MCF 10A (cell line): ENCODE measurements at regions of chr14 and their contacts with region 1.

Region 1: DNA sequence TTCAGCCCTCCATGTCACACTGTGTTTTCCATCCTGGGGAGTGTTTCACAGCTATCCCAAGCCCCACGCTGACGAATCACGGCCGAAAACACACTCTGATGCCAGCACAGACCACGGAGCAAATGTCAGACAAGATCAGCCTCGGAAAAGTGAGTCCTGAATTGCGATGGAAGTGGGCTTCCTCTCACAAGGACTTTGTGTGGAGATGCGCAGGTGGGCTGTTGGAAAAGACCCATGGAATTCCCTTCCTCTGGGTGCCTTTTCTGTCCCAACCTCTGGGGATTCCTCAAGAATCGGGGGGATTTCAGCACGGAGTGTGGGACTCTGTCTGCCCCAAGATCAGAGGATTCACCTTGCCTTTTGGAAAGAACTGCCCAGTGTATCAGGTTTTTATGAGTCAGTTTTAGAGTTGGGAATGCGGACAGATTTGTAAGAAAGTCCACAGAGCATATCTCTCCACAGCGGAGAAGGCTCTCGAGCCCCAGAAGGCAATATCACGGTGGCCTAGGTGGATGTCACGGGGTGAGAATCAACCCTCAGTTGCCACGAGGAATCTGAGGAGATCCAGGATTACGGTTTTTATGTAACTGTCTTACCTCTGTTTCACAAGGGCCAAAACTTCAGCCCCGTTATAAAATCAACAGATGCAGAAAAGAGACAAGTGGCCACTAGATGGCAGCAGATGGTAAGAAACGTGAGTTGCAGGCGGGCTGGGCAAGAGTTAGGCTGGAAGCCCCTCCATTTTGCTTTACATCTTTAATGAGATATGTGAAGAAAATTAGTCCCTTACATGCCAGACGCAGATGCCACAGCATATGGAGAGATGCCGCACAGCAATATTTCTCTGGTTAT is 201.9 kb downstream of the DAD1 start:
- DNase-seq: peak; percentile 79
- H3K4me3 Mint-ChIP-seq: no peak overlapping the region
- H3K27ac Mint-ChIP-seq: no peak overlapping the region
- H3K4me1 Mint-ChIP-seq: peaks cover 27% of the 10 kb centered on the region
- H3K27me3 Mint-ChIP-seq: no peaks in the 10 kb centered on the region
- CTCF ChIP-seq: peak; percentile 72

Region 2: DNA sequence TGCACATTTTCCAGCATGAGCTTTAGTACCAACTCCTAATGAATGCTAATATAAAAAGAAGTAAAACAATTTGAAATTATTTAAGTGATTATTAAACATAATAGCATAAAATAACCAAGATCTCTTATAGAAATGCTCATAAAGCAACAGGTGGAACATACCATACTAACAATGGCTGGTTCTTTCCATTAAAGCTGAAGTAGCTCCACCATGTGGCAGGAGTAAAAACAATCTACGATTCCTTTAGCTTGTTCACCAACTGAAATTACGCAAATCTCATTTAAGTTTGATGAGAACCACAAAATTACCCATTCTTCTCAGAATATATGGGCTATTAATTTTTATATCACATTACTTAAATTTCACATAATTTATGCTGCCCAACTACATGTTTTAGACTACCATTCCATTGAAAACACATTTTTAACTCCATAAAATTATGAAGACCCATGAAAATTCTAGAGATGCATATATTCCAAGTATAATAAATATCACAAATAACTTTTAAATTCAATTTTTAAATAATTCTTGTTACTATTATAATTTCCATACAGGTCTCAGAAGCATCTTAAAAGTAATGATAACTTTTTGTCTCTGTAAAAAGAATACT is 11.7 kb before region 1 on chr14:
- CTCF ChIA-PET with region 1: interaction called, 15 read pairs
- POLR2A ChIA-PET with region 1: interaction called, 5 read pairs
- intact Hi-C with region 1: no loop called
- DNase-seq: peak; percentile 63
- H3K4me3 Mint-ChIP-seq: no peak overlapping the region
- H3K27ac Mint-ChIP-seq: no peak overlapping the region
- H3K4me1 Mint-ChIP-seq: peaks cover 9% of the 10 kb centered on the region
- H3K27me3 Mint-ChIP-seq: peaks cover 20% of the 10 kb centered on the region
- CTCF ChIP-seq: peak; percentile 69

Region 3: GRCh38 chr14:22412926-22413411 is 25.8 kb after region 1 on chr14:
- CTCF ChIA-PET with region 1: interaction called, 14 read pairs
- POLR2A ChIA-PET with region 1: no interaction called
- intact Hi-C with region 1: no loop called
- DNase-seq: no peak
- H3K4me3 Mint-ChIP-seq: no peak overlapping the region
- H3K27ac Mint-ChIP-seq: no peak overlapping the region
- H3K4me1 Mint-ChIP-seq: no peaks in the 10 kb centered on the region
- H3K27me3 Mint-ChIP-seq: peaks cover 18% of the 10 kb centered on the region
- CTCF ChIP-seq: no peak

Region 4: GRCh38 chr14:22432348-22432976 is 45.3 kb after region 1 on chr14:
- CTCF ChIA-PET with region 1: interaction called, 13 read pairs
- POLR2A ChIA-PET with region 1: interaction called, 3 read pairs
- intact Hi-C with region 1: no loop called
- DNase-seq: peak; percentile 97
- H3K4me3 Mint-ChIP-seq: peak overlapping the region; percentile 25
- H3K27ac Mint-ChIP-seq: no peak overlapping the region
- H3K4me1 Mint-ChIP-seq: peaks cover 29% of the 10 kb centered on the region
- H3K27me3 Mint-ChIP-seq: no peaks in the 10 kb centered on the region
- CTCF ChIP-seq: no peak

Region 5: GRCh38 chr14:22472935-22473854 is 86.0 kb after region 1 on chr14:
- CTCF ChIA-PET with region 1: interaction called, 233 read pairs
- POLR2A ChIA-PET with region 1: interaction called, 3 read pairs
- intact Hi-C with region 1: loop called (anchors 1 kb)
- DNase-seq: peak; percentile 56
- H3K4me3 Mint-ChIP-seq: no peak overlapping the region
- H3K27ac Mint-ChIP-seq: no peak overlapping the region
- H3K4me1 Mint-ChIP-seq: peaks cover 17% of the 10 kb centered on the region
- H3K27me3 Mint-ChIP-seq: no peaks in the 10 kb centered on the region
- CTCF ChIP-seq: peak; percentile 60